Adrenal gland (tissue), 19 donors: ENCODE measurements at regions of chr6 and their contacts with region 1.

Region 1: GRCh38 chr6:89347825-89348224 is 4.7 kb downstream of the UBE2J1 start:
- DNase-seq: peak in 1 of 7 donors; percentile 41
- H3K4me3 ChIP-seq: no peak overlapping the region
- H3K27ac ChIP-seq: peak overlapping the region in 3 of 5 donors; percentile 6 to 43 (median 14)
- H3K4me1 ChIP-seq: peaks cover 35 to 54% of the 10 kb centered on the region in 2 donors
- H3K27me3 ChIP-seq: no peaks in the 10 kb centered on the region
- CTCF ChIP-seq: no peak
- POLR2A ChIP-seq: no peak

Region 2: GRCh38 chr6:88698661-88699060 is 649.2 kb before region 1 on chr6:
- intact Hi-C with region 1: loop called in 1 of 2 experiments (anchors 10 kb)
- DNase-seq: no peak
- H3K4me3 ChIP-seq: no peak overlapping the region
- H3K27ac ChIP-seq: no peak overlapping the region
- H3K4me1 ChIP-seq: peaks cover 0 to 4% of the 10 kb centered on the region in 2 donors
- H3K27me3 ChIP-seq: no peaks in the 10 kb centered on the region
- CTCF ChIP-seq: no peak
- POLR2A ChIP-seq: no peak

Region 3: DNA sequence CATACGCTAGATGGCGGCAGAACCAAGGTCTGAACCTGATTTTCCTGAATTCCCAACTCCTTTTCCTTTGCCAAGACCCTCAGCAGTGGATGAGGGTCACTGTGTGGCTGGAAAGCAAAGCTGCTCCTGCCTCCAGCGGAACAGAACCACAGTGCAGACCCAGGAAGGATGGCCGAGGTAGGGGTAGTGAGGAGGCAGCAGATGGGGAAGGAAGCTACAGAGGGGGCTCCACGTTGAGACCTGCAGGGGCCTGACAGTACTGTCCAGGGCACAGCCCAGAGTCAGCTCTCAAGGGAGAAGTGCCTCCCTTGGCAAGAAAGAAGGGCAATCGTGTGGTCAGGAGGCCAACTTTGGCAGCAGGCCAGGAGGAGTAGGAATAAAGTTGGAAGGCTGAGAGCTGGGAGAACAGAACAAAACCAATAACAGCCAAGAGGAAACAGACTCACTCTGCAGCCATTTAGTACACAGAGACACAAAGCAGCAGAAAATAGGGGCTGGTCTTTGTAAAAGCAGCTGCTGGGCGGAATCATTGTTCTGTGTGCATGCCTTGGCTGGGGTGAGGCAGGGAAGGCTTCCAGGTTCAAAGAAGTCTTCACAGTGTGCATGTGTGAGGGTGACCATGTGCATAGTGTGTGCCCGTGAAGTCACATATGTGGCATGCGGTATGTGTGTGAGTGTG is 35.8 kb before region 1 on chr6:
- intact Hi-C with region 1: no loop called
- DNase-seq: peak; percentile 46 to 77 (median 70)
- H3K4me3 ChIP-seq: no peak overlapping the region
- H3K27ac ChIP-seq: peak overlapping the region in 1 of 5 donors; percentile 53
- H3K4me1 ChIP-seq: peaks cover 13 to 18% of the 10 kb centered on the region in 2 donors
- H3K27me3 ChIP-seq: no peaks in the 10 kb centered on the region
- CTCF ChIP-seq: peak in 4 of 6 experiments; percentile 33 to 53 (median 41)
- POLR2A ChIP-seq: no peak